Right ventricle myocardium inferior (tissue), 1 donor: ENCODE measurements at regions of chr18 and their contacts with region 1.

Region 1: GRCh38 chr18:63511286-63511685 is 30.9 kb upstream of the SERPINB12 start:
- DNase-seq: no peak
- ATAC-seq: no peak

Region 2: DNA sequence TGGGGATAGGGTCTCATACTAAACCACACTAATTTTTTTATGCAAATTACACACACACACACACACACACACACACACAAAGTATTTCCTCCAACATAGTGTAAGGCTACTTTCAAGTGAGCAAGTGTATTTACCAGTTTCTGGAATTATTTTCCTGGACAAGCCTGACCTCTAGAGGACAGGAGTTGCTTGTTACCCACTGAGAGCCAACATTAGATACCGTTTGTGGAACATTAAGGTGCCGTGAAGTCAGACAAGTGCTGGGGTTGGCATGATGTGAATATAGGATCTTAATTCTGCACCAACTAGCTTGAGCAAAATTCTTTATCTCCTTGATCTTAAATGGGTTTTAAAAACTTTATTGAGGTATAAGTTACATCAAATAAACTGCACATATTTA is 336.9 kb after region 1 on chr18:
- intact Hi-C with region 1: loop called (anchors 5 kb)
- DNase-seq: no peak
- ATAC-seq: no peak